Caco-2 (cell line): ENCODE measurements at regions of chr12 and their contacts with region 1.

Region 1: GRCh38 chr12:1795785-1796514 is 24.4 kb upstream of the LRTM2 start:
- DNase-seq: peak; percentile 93 to 97
- H3K4me3 ChIP-seq: peak overlapping the region; percentile 40
- H3K4me3 Mint-ChIP-seq: peak overlapping the region; percentile 82
- H3K27ac Mint-ChIP-seq: peak overlapping the region; percentile 82
- H3K4me1 ChIP-seq: peaks cover 8% of the 10 kb centered on the region; the same call in 1 of the 2 replicates
- H3K4me1 Mint-ChIP-seq: peaks cover 9% of the 10 kb centered on the region
- H3K27me3 ChIP-seq: no peaks in the 10 kb centered on the region
- H3K27me3 Mint-ChIP-seq: no peaks in the 10 kb centered on the region
- CTCF ChIP-seq: peak; percentile 76 to 99

Region 2: DNA sequence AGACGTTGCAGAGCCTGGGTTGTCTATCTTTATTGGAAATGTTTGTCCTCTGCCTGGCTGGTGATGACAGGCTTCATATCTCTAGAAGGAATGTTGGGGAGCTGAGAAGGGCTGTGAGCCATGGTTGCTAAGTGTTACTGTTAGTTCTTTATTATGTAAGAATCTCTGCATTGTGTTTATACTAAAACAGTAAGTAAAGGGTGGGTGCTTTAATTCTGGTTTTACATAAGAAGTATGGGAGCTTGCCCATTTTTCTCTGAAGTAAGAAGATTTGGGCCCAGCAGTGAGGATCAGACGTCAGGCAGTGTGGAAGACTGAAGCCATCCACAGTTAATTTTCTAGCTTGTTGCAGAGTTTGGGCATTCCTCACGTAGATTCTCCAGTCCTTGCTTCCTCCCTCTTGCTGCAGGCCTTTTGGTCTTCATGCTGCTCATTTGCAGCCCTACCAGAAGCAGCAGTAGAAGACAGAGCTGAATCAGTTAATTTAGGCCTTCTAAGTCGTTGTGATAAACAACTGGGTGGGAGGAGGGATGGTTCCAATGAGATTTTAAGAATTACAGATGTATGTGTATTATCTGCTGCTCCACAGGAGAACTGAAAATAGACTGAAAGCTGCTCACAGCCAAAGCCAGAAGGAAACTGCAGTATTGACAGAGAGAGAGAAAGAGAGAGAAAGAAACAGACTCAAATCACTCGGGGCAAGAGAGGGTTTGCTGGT is 145.5 kb before region 1 on chr12:
- CTCF ChIA-PET with region 1: interaction called, 97 read pairs
- POLR2A ChIA-PET with region 1: interaction called, 4 read pairs
- intact Hi-C with region 1: loop called (anchors 1 kb)
- DNase-seq: no peak
- H3K4me3 ChIP-seq: no peak overlapping the region
- H3K4me3 Mint-ChIP-seq: no peak overlapping the region
- H3K27ac Mint-ChIP-seq: no peak overlapping the region
- H3K4me1 ChIP-seq: no peaks in the 10 kb centered on the region
- H3K4me1 Mint-ChIP-seq: no peaks in the 10 kb centered on the region
- H3K27me3 ChIP-seq: no peaks in the 10 kb centered on the region
- H3K27me3 Mint-ChIP-seq: no peaks in the 10 kb centered on the region
- CTCF ChIP-seq: no peak

Region 3: GRCh38 chr12:1690578-1691122 is 105.3 kb before region 1 on chr12 and contains the start of gene ADIPOR2:
- CTCF ChIA-PET with region 1: interaction called, 20 read pairs
- POLR2A ChIA-PET with region 1: interaction called, 7 read pairs
- intact Hi-C with region 1: loop called (anchors 2 kb)
- DNase-seq: peak; percentile 98 to 99
- H3K4me3 ChIP-seq: peak within 1 kb of the TSS; percentile 76
- H3K4me3 Mint-ChIP-seq: peak within 1 kb of the TSS; percentile 81
- H3K27ac Mint-ChIP-seq: peak within 1 kb of the TSS; percentile 85
- H3K4me1 ChIP-seq: peaks cover 27% of the 10 kb centered on the region
- H3K4me1 Mint-ChIP-seq: peaks cover 12% of the 10 kb centered on the region
- H3K27me3 ChIP-seq: no peaks in the 10 kb centered on the region
- H3K27me3 Mint-ChIP-seq: no peaks in the 10 kb centered on the region
- CTCF ChIP-seq: no peak
- total RNA-seq, gene ADIPOR2: 119 and 125 TPM in 2 replicates

Region 4: DNA sequence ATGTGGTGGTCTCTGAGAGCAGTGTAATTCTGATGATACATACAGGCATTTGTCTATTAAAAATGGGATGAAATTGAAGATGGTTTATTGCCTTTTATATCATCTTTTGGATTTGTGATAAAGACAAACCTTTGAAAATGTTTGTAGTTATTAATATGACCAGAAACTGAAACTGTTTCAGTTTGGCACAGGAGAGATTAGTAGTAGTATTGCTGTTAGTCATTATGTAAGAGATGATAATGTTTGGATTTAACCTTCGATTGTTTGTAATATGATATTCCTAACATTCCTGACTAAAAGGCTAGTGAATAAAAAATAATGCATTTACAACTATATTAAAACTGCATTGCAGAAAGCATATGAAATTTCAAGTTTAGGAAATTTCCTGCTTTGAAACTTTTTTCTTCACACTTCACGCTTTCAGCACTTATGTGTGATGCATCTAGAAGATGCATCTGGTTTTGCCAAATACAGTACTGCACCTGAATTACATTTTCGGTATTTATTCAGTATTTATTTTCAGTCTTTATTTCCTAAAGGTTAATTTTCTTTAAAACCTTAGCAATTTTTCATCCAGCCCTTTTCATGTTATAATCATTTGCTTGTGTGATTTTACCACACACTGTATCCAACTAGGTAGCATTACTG is 79.6 kb before region 1 on chr12:
- CTCF ChIA-PET with region 1: interaction called, 11 read pairs
- POLR2A ChIA-PET with region 1: no interaction called
- intact Hi-C with region 1: loop called (anchors 1 kb)
- DNase-seq: no peak
- H3K4me3 ChIP-seq: no peak overlapping the region
- H3K4me3 Mint-ChIP-seq: no peak overlapping the region
- H3K27ac Mint-ChIP-seq: no peak overlapping the region
- H3K4me1 ChIP-seq: peaks cover 6% of the 10 kb centered on the region
- H3K4me1 Mint-ChIP-seq: peaks cover 14% of the 10 kb centered on the region
- H3K27me3 ChIP-seq: no peaks in the 10 kb centered on the region
- H3K27me3 Mint-ChIP-seq: no peaks in the 10 kb centered on the region
- CTCF ChIP-seq: no peak

Region 5: GRCh38 chr12:1779783-1780182 is 16.2 kb before region 1 on chr12:
- CTCF ChIA-PET with region 1: interaction called, 19 read pairs
- POLR2A ChIA-PET with region 1: no interaction called
- intact Hi-C with region 1: no loop called
- DNase-seq: no peak
- H3K4me3 ChIP-seq: no peak overlapping the region
- H3K4me3 Mint-ChIP-seq: no peak overlapping the region
- H3K27ac Mint-ChIP-seq: no peak overlapping the region
- H3K4me1 ChIP-seq: peaks cover 39% of the 10 kb centered on the region
- H3K4me1 Mint-ChIP-seq: peaks cover 36% of the 10 kb centered on the region
- H3K27me3 ChIP-seq: no peaks in the 10 kb centered on the region
- H3K27me3 Mint-ChIP-seq: no peaks in the 10 kb centered on the region
- CTCF ChIP-seq: no peak

Region 6: GRCh38 chr12:1890810-1891209 is 94.9 kb after region 1 on chr12:
- CTCF ChIA-PET with region 1: no interaction called
- POLR2A ChIA-PET with region 1: no interaction called
- intact Hi-C with region 1: no loop called
- DNase-seq: peak in 1 of 2 experiments; percentile 30
- H3K4me3 ChIP-seq: no peak overlapping the region
- H3K4me3 Mint-ChIP-seq: no peak overlapping the region
- H3K27ac Mint-ChIP-seq: no peak overlapping the region
- H3K4me1 ChIP-seq: peaks cover under 1% of the 10 kb centered on the region; the same call in 1 of the 2 replicates
- H3K4me1 Mint-ChIP-seq: no peaks in the 10 kb centered on the region
- H3K27me3 ChIP-seq: no peaks in the 10 kb centered on the region
- H3K27me3 Mint-ChIP-seq: peaks cover 20% of the 10 kb centered on the region
- CTCF ChIP-seq: no peak

Region 7: DNA sequence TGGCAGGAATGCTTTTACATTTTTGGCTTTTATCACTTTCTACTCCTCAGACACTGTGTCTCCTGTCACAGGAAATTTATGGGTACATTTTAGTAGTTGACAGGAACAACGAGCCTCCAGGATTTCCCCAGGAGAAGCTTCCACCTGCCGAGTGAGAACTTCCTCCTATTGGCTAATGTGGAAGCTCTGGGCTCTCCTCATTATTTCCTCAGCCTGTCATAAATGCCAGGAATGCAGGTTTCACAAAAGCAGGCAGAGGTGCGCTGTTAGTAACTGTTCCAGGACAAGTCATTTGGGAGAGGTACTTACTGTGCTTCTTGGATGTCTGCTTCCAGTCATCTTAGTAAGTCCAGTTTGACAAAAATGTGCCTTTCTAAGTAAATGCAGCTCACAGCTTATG is 227.4 kb after region 1 on chr12:
- CTCF ChIA-PET with region 1: no interaction called
- POLR2A ChIA-PET with region 1: no interaction called
- intact Hi-C with region 1: no loop called
- DNase-seq: peak in 1 of 2 experiments; percentile 52
- H3K4me3 ChIP-seq: no peak overlapping the region
- H3K4me3 Mint-ChIP-seq: no peak overlapping the region
- H3K27ac Mint-ChIP-seq: no peak overlapping the region
- H3K4me1 ChIP-seq: peaks cover 8% of the 10 kb centered on the region; the same call in 1 of the 2 replicates
- H3K4me1 Mint-ChIP-seq: no peaks in the 10 kb centered on the region
- H3K27me3 ChIP-seq: no peaks in the 10 kb centered on the region
- H3K27me3 Mint-ChIP-seq: peaks cover 6% of the 10 kb centered on the region
- CTCF ChIP-seq: no peak

Region 8: GRCh38 chr12:2034633-2035430 is 238.9 kb after region 1 on chr12:
- CTCF ChIA-PET with region 1: no interaction called
- POLR2A ChIA-PET with region 1: no interaction called
- intact Hi-C with region 1: loop called (anchors 2 kb)
- DNase-seq: peak; percentile 80 to 94
- H3K4me3 ChIP-seq: peak overlapping the region; percentile 27; the same call in 1 of the 2 replicates
- H3K4me3 Mint-ChIP-seq: peak overlapping the region; percentile 48
- H3K27ac Mint-ChIP-seq: no peak overlapping the region
- H3K4me1 ChIP-seq: 0 out of 2 replicates have a peak, but pooled peaks cover 3% of the 10 kb centered on the region
- H3K4me1 Mint-ChIP-seq: no peaks in the 10 kb centered on the region
- H3K27me3 ChIP-seq: peaks cover 3% of the 10 kb centered on the region
- H3K27me3 Mint-ChIP-seq: peaks cover 35% of the 10 kb centered on the region
- CTCF ChIP-seq: peak; percentile 88 to 98

Region 9: GRCh38 chr12:3107071-3107583 is 1311.2 kb after region 1 on chr12:
- CTCF ChIA-PET with region 1: no interaction called
- POLR2A ChIA-PET with region 1: no interaction called
- intact Hi-C with region 1: no loop called
- DNase-seq: no peak
- H3K4me3 ChIP-seq: no peak overlapping the region
- H3K4me3 Mint-ChIP-seq: no peak overlapping the region
- H3K27ac Mint-ChIP-seq: no peak overlapping the region
- H3K4me1 ChIP-seq: peaks cover 25% of the 10 kb centered on the region
- H3K4me1 Mint-ChIP-seq: peaks cover 31% of the 10 kb centered on the region
- H3K27me3 ChIP-seq: no peaks in the 10 kb centered on the region
- H3K27me3 Mint-ChIP-seq: no peaks in the 10 kb centered on the region
- CTCF ChIP-seq: no peak